ENCODE measurements at regions of chr20 and their contacts with region 1.

Region 1: GRCh38 chr20:7859356-7859802 is 80.9 kb downstream of the HAO1 start:
- DNase-seq: peak; percentile 60
- H3K4me3 ChIP-seq: no peak overlapping the region
- H3K27ac ChIP-seq: no peak overlapping the region
- H3K4me1 ChIP-seq: no peaks in the 10 kb centered on the region
- H3K27me3 ChIP-seq: peaks cover 12% of the 10 kb centered on the region
- CTCF ChIP-seq: peak; percentile 77

Region 2: GRCh38 chr20:6583134-6583738 is 1276.1 kb before region 1 on chr20:
- CTCF ChIA-PET with region 1: no interaction called
- POLR2A ChIA-PET with region 1: no interaction called
- intact Hi-C with region 1: loop called (anchors 10 kb)
- DNase-seq: peak; percentile 40
- H3K4me3 ChIP-seq: no peak overlapping the region
- H3K27ac ChIP-seq: no peak overlapping the region
- H3K4me1 ChIP-seq: no peaks in the 10 kb centered on the region
- H3K27me3 ChIP-seq: no peaks in the 10 kb centered on the region
- CTCF ChIP-seq: peak; percentile 74

Region 3: GRCh38 chr20:6636209-6637159 is 1222.9 kb before region 1 on chr20:
- CTCF ChIA-PET with region 1: no interaction called
- POLR2A ChIA-PET with region 1: no interaction called
- intact Hi-C with region 1: loop called (anchors 5 kb)
- DNase-seq: peak; percentile 48
- H3K4me3 ChIP-seq: no peak overlapping the region
- H3K27ac ChIP-seq: no peak overlapping the region
- H3K4me1 ChIP-seq: no peaks in the 10 kb centered on the region
- H3K27me3 ChIP-seq: no peaks in the 10 kb centered on the region
- CTCF ChIP-seq: peak; percentile 51

Region 4: DNA sequence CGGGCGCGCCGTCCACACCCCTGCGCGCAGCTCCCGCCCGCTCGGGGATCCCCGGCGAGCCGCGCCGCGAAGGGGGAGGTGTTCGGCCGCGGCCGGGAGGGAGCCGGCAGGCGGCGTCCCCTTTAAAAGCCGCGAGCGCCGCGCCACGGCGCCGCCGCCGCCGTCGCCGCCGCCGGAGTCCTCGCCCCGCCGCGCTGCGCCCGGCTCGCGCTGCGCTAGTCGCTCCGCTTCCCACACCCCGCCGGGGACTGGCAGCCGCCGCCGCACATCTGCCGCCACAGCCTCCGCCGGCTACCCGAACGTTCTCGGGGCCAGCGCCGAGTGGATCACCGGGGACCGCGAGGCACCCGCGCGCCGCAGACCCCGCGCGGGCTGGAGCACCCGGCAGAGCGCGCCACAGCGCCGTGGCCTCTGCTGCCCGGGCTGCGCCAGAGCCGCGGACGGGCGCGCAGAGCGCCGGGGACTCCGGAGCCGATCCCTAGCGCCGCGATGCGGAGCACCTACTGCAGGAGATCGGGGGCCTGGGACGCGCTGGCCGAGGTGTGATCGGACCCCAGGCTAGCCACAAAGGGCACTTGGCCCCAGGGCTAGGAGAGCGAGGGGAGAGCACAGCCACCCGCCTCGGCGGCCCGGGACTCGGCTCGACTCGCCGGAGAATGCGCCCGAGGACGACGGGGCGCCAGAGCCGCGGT is 1091.7 kb before region 1 on chr20 and contains the start of gene BMP2:
- CTCF ChIA-PET with region 1: no interaction called
- POLR2A ChIA-PET with region 1: no interaction called
- intact Hi-C with region 1: loop called (anchors 5 kb)
- DNase-seq: peak; percentile 49
- H3K4me3 ChIP-seq: peak within 1 kb of the TSS; percentile 41
- H3K27ac ChIP-seq: no peak within 1 kb of the TSS
- H3K4me1 ChIP-seq: peaks cover 5% of the 10 kb centered on the region
- H3K27me3 ChIP-seq: peaks cover 72% of the 10 kb centered on the region
- CTCF ChIP-seq: no peak
- total RNA-seq, gene BMP2: not detected in 2 replicates

Region 5: GRCh38 chr20:6828794-6829423 is 1030.5 kb before region 1 on chr20:
- CTCF ChIA-PET with region 1: no interaction called
- POLR2A ChIA-PET with region 1: no interaction called
- intact Hi-C with region 1: loop called (anchors 2 kb)
- DNase-seq: peak; percentile 67
- H3K4me3 ChIP-seq: no peak overlapping the region
- H3K27ac ChIP-seq: no peak overlapping the region
- H3K4me1 ChIP-seq: no peaks in the 10 kb centered on the region
- H3K27me3 ChIP-seq: no peaks in the 10 kb centered on the region
- CTCF ChIP-seq: peak; percentile 75

Region 6: DNA sequence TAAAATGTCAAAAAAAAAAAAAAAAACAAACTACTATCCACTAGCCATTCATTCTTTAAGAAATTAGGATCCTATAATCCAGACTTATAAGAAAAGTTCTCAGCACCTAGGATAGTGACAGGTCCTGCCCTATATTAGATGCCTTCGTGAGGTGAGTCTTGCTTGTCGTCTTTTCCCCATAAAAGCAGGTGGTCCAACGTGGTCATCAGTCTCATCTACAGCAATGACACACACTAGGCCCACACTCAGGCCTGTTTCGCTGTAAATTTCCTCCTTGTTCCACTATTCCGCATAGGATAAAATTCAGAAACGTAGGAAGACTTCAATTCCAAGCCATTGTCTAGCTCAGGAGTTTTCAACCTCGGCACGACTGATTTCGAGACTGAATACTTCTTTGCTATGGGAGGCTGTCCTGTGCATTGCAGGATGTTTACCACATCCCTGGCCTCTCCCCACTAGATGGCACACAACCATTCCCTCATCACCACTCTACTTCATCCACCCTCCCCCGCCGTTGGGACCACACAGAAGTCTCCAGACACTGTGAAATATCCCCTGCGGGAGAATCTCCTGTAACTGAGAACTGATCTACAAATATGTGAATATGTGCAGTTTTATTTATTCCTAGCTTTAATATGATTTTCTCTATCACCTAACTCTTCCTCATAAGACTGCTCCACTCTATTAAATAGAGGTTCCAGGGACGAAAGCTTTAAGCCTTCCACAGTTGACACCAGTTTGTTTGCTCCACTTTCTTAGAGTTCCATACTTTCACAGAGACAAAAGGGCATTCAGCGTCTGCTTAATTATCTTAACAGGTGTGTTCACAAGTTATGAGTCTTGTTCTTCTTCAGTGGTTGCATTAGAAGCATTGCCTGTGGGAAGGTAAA is 745.6 kb before region 1 on chr20:
- CTCF ChIA-PET with region 1: no interaction called
- POLR2A ChIA-PET with region 1: no interaction called
- intact Hi-C with region 1: loop called (anchors 10 kb)
- DNase-seq: peak; percentile 33
- H3K4me3 ChIP-seq: no peak overlapping the region
- H3K27ac ChIP-seq: no peak overlapping the region
- H3K4me1 ChIP-seq: no peaks in the 10 kb centered on the region
- H3K27me3 ChIP-seq: no peaks in the 10 kb centered on the region
- CTCF ChIP-seq: peak; percentile 39; the same call in 1 of the 2 replicates

Region 7: GRCh38 chr20:7470912-7471311 is 388.5 kb before region 1 on chr20:
- CTCF ChIA-PET with region 1: no interaction called
- POLR2A ChIA-PET with region 1: no interaction called
- intact Hi-C with region 1: no loop called
- DNase-seq: no peak
- H3K4me3 ChIP-seq: no peak overlapping the region
- H3K27ac ChIP-seq: no peak overlapping the region
- H3K4me1 ChIP-seq: no peaks in the 10 kb centered on the region
- H3K27me3 ChIP-seq: no peaks in the 10 kb centered on the region
- CTCF ChIP-seq: no peak

Region 8: DNA sequence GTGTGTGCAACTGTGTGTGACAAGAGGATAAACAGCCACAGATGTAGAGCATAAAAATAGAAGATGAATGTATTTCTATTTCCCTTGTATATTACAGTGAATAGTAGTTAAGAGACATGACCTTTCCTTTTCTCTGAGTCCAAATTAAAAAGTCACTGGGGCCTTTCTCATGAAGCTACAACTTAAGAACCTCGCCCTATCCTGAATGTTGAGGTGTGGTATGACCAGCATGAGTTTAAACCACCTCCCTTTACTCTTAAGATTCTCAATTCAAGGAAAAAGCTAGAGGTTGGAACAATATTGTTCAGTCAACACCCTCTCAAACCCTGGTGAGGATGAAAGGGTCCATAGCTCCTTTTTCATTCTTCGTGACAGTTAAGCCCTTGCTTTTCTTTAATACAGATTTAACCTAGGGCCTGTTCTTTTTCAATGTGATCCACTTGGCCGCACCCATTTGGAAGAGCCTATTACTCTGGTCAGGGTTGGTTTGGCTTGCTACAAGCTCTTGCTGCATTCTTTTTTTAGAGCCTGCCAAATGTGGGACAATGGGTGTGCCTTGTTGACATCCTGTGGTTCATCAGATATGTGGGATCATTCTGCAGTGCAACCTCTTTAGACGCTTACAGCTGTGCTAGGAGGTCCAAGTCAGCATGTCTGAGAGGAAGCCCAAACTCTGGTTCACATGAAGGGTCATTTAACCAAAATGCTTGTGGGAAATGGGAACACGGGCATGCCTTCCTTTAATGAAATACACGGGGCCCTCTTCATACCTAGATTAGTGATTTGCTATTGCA is 209.1 kb before region 1 on chr20:
- CTCF ChIA-PET with region 1: no interaction called
- POLR2A ChIA-PET with region 1: no interaction called
- intact Hi-C with region 1: no loop called
- DNase-seq: no peak
- H3K4me3 ChIP-seq: no peak overlapping the region
- H3K27ac ChIP-seq: no peak overlapping the region
- H3K4me1 ChIP-seq: no peaks in the 10 kb centered on the region
- H3K27me3 ChIP-seq: peaks cover 3% of the 10 kb centered on the region
- CTCF ChIP-seq: no peak

Region 9: GRCh38 chr20:7828437-7828836 is 30.9 kb before region 1 on chr20:
- CTCF ChIA-PET with region 1: no interaction called
- POLR2A ChIA-PET with region 1: no interaction called
- intact Hi-C with region 1: no loop called
- DNase-seq: no peak
- H3K4me3 ChIP-seq: no peak overlapping the region
- H3K27ac ChIP-seq: no peak overlapping the region
- H3K4me1 ChIP-seq: no peaks in the 10 kb centered on the region
- H3K27me3 ChIP-seq: peaks cover 10% of the 10 kb centered on the region
- CTCF ChIP-seq: no peak